GM12878 (cell line): ENCODE measurements at regions of chr11 and their contacts with region 1.

Region 1: GRCh38 chr11:119018074-119018938 is at the starts of genes RPS25 and TRAPPC4:
- DNase-seq: peak; percentile 92
- ATAC-seq: peak; percentile 92
- H3K4me3 ChIP-seq: peak within 1 kb of the TSS; percentile 96
- H3K27ac ChIP-seq: peak within 1 kb of the TSS; percentile 82
- H3K4me1 ChIP-seq: no peaks in the 10 kb centered on the region; the same call in 1 of the 2 replicates
- H3K27me3 ChIP-seq: no peaks in the 10 kb centered on the region
- CTCF ChIP-seq: no peak
- EP300 ChIP-seq: no peak; a peak in 1 of 4 replicates
- POLR2A ChIP-seq: peak; percentile 95
- RAD21 ChIP-seq: no peak
- polyA plus RNA-seq, gene RPS25: 3,292 to 3,419 TPM
- polyA plus RNA-seq, gene TRAPPC4: 205 to 231 TPM

Region 2: GRCh38 chr11:118168751-118169150 is 849.6 kb before region 1 on chr11:
- CTCF ChIA-PET with region 1: no interaction called
- POLR2A ChIA-PET with region 1: no interaction called
- RAD21 ChIA-PET with region 1: no interaction called
- SMC1A ChIA-PET with region 1: no interaction called
- in situ Hi-C with region 1: no loop called
- intact Hi-C with region 1: no loop called
- DNase-seq: no peak
- ATAC-seq: no peak
- H3K4me3 ChIP-seq: no peak overlapping the region
- H3K27ac ChIP-seq: no peak overlapping the region
- H3K4me1 ChIP-seq: no peaks in the 10 kb centered on the region
- H3K27me3 ChIP-seq: peaks cover 1 to 3% of the 10 kb centered on the region in 2 experiments; a peak in 3 of 4 replicates
- CTCF ChIP-seq: no peak
- EP300 ChIP-seq: no peak
- POLR2A ChIP-seq: no peak
- RAD21 ChIP-seq: no peak

Region 3: DNA sequence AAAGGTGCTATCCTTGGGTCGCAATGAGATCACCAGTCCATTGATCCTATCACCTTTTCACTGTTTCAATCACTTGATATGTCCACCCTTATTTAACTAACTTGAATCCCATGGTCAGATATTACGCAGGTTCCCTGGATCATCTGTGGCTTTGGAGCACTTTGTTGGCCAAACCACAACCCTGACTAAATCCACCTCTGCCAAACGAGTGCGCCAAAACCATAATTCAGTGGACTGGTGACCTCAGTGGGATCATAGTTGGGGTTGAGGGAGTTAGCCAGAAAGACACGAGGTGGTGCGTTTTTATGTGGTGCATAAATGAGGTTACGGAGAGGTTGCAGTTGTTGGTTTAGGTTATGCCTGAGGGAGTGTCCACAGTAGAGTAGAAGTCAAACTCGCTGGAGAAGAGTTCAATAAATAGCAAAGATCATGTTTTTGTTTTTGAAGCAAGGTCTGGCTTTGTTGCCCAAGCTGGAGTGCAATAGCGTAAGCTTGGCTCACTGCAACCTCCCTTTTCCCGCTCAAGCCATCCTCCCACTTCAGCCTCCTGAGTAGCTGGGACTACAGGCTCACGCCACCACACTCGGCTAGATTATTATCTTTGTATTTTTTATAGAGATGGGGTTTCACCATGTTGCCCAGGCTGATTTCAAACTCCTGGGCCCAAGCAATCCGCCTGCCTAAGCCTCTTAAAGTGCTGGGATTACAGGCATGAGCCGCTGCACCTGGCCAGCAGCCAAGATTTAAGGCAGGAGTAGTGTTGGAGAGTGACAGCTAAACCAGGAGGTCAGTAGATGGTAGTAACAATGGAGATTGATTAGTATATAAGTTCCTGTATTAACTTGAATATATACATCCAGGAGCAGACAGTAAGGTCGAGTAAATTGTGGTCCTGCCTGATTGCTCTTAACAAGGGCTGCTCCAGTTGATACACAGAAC is 42.3 kb before region 1 on chr11:
- CTCF ChIA-PET with region 1: no interaction called
- POLR2A ChIA-PET with region 1: no interaction called
- RAD21 ChIA-PET with region 1: no interaction called
- SMC1A ChIA-PET with region 1: no interaction called
- in situ Hi-C with region 1: no loop called
- intact Hi-C with region 1: no loop called
- DNase-seq: no peak
- ATAC-seq: no peak
- H3K4me3 ChIP-seq: no peak overlapping the region
- H3K27ac ChIP-seq: no peak overlapping the region
- H3K4me1 ChIP-seq: no peaks in the 10 kb centered on the region
- H3K27me3 ChIP-seq: no peaks in the 10 kb centered on the region
- CTCF ChIP-seq: no peak
- EP300 ChIP-seq: no peak
- POLR2A ChIP-seq: no peak
- RAD21 ChIP-seq: no peak

Region 4: DNA sequence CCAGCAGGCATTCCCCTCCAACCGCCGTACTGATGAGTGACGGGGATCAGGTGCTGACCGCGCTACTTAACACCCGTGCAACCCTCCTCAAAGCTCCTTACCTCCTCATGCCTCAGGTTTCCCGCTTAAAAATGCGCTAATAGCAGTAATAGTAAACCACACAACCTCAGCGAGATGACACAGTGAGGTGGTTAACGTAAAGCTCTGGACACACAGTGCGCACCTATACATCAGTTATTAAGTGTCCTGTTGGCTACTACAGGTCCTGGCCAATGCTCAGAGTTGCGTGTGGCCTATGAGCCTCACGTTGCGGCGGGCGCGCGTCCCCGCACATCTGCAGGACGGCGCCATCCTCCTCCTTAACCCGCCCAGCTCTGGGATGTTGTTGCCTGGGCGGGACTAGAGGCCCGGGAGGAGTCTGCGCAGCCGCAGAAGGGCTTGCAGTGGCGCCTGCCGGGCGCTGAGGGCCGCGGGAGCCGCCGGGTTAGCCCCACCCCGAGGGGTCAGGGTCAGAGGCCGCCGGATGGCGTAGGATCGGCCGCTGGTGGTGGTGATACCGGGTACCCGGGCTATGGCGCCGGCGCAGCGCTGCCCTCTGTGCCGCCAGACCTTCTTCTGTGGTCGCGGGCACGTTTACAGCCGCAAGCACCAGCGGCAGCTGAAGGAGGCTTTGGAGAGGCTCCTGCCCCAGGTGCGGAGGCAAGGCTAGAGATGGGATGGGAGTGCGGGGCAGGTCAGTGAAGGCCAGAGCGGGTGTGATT is 20.5 kb before region 1 on chr11 and contains the start of gene CENATAC:
- CTCF ChIA-PET with region 1: interaction called, 3 read pairs
- POLR2A ChIA-PET with region 1: interaction called, 9 read pairs
- RAD21 ChIA-PET with region 1: interaction called, 3 read pairs
- SMC1A ChIA-PET with region 1: interaction called, 26 read pairs
- in situ Hi-C with region 1: no loop called
- intact Hi-C with region 1: loop called (anchors 1 kb)
- DNase-seq: peak; percentile 76
- ATAC-seq: peak; percentile 97
- H3K4me3 ChIP-seq: peak within 1 kb of the TSS; percentile 91
- H3K27ac ChIP-seq: peak within 1 kb of the TSS; percentile 87
- H3K4me1 ChIP-seq: no peaks in the 10 kb centered on the region; the same call in none of the 2 replicates
- H3K27me3 ChIP-seq: no peaks in the 10 kb centered on the region
- CTCF ChIP-seq: no peak; a peak in 1 of 6 replicates
- EP300 ChIP-seq: no peak
- POLR2A ChIP-seq: peak; percentile 96
- RAD21 ChIP-seq: no peak
- polyA plus RNA-seq, gene CENATAC: 4.8 to 8.2 TPM

Region 5: DNA sequence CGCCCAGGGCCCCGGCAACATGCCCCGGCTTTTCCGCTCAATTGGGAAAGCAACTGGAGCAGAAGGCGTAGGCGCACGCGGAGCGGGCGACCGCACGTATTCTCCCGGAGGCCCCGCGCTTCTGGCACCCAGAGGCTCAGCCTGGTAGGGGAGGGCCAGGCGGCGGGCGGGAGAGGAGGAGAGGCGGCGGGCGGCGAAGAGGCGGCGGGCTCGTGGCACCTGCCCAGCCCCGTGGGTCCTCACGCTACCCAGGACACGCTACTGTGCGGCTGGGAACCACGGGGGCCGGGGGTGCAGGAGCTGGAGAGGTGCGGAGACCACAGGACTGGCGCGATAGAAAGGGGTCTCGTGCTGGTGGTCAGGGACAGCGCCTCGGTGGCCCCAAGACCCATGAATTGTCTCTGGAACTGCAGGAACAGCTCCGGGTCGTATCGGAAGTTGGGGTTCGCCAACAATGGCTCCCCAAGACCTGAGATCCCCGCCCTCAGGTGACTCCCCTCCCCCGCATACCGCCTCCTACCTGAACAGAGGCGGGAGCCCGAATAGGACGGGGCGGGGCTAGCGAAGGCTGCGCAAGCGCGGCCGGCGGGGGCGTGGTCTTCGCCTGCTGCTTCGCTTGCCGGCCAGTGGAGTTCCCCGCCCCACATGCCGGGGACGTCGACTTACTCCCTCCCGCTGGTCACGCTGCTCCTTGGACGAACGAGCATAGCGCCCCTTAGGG is 12.2 kb after region 1 on chr11 and contains the start of gene SLC37A4:
- CTCF ChIA-PET with region 1: interaction called, 16 read pairs
- POLR2A ChIA-PET with region 1: interaction called, 9 read pairs
- RAD21 ChIA-PET with region 1: interaction called, 3 read pairs
- SMC1A ChIA-PET with region 1: interaction called, 40 read pairs
- in situ Hi-C with region 1: no loop called
- intact Hi-C with region 1: no loop called
- DNase-seq: peak; percentile 94
- ATAC-seq: peak; percentile 88
- H3K4me3 ChIP-seq: peak within 1 kb of the TSS; percentile 78
- H3K27ac ChIP-seq: peak within 1 kb of the TSS; percentile 80
- H3K4me1 ChIP-seq: peaks cover 14% of the 10 kb centered on the region
- H3K27me3 ChIP-seq: no peaks in the 10 kb centered on the region
- CTCF ChIP-seq: peak; percentile 95 to 96 (median 96); a peak in 4 of 6 replicates
- EP300 ChIP-seq: no peak
- POLR2A ChIP-seq: peak; percentile 69
- RAD21 ChIP-seq: peak; percentile 64
- polyA plus RNA-seq, gene SLC37A4: 11.9 to 12.1 TPM

Region 6: GRCh38 chr11:119051440-119052162 is 33.3 kb after region 1 on chr11:
- CTCF ChIA-PET with region 1: interaction called, 16 read pairs
- POLR2A ChIA-PET with region 1: interaction called, 14 read pairs
- RAD21 ChIA-PET with region 1: interaction called, 5 read pairs
- SMC1A ChIA-PET with region 1: no interaction called
- in situ Hi-C with region 1: no loop called
- intact Hi-C with region 1: loop called (anchors 2 kb)
- DNase-seq: peak; percentile 51
- ATAC-seq: peak; percentile 88
- H3K4me3 ChIP-seq: peak overlapping the region; percentile 43; the same call in 1 of the 2 replicates
- H3K27ac ChIP-seq: peak overlapping the region; percentile 71
- H3K4me1 ChIP-seq: peaks cover 33% of the 10 kb centered on the region
- H3K27me3 ChIP-seq: no peaks in the 10 kb centered on the region
- CTCF ChIP-seq: no peak
- EP300 ChIP-seq: no peak
- POLR2A ChIP-seq: peak; percentile 73
- RAD21 ChIP-seq: no peak

Region 7: DNA sequence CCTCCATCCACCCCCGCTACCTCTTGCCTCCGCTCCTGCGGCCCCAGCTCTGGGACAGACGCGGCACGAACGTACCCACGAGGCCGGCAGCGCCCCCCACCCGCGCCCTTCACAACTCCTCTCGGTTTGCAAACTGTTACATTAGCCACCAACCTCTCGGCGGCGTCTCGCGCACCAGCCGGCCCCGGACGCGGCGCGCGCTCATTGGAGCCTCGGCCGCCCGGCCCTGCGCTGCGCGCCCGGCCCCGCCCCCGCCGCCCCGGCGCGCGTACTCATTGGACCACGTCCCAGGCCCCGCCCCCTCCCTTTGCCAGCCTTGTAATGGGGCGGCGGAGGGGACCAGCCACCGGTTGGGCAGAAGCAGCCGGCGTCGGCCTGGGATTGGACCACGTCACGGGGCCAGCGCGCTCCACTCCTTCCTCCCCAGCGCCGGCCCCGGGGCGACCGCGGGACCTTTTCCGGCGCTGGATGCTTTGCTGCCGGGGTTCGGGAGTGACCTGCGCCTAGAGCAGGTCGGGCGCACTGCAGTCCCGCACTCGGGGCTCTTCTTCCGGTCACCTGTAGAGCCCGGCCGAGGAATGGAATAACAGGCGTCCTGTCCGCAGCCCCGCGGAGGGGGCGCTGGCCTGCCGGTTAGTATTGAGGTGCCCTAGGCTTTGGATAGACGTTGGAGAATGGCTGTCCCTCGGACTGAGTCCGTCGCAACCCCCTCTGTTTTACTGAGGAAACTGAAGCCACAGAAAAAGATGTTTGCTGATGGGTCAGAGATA is 38.9 kb after region 1 on chr11 and contains the start of gene HYOU1:
- CTCF ChIA-PET with region 1: interaction called, 16 read pairs
- POLR2A ChIA-PET with region 1: interaction called, 14 read pairs
- RAD21 ChIA-PET with region 1: no interaction called
- SMC1A ChIA-PET with region 1: no interaction called
- in situ Hi-C with region 1: no loop called
- intact Hi-C with region 1: loop called (anchors 2 kb)
- DNase-seq: peak; percentile 69
- ATAC-seq: peak; percentile 93
- H3K4me3 ChIP-seq: peak within 1 kb of the TSS; percentile 96
- H3K27ac ChIP-seq: peak within 1 kb of the TSS; percentile 79
- H3K4me1 ChIP-seq: peaks cover 19% of the 10 kb centered on the region
- H3K27me3 ChIP-seq: no peaks in the 10 kb centered on the region
- CTCF ChIP-seq: peak; percentile 17 to 26 (median 22); a peak in 2 of 6 replicates
- EP300 ChIP-seq: no peak
- POLR2A ChIP-seq: peak; percentile 88
- RAD21 ChIP-seq: no peak
- polyA plus RNA-seq, gene HYOU1: 15.4 to 46.3 TPM